ENCODE measurements at regions of chr6 and their contacts with region 1.

Region 1: DNA sequence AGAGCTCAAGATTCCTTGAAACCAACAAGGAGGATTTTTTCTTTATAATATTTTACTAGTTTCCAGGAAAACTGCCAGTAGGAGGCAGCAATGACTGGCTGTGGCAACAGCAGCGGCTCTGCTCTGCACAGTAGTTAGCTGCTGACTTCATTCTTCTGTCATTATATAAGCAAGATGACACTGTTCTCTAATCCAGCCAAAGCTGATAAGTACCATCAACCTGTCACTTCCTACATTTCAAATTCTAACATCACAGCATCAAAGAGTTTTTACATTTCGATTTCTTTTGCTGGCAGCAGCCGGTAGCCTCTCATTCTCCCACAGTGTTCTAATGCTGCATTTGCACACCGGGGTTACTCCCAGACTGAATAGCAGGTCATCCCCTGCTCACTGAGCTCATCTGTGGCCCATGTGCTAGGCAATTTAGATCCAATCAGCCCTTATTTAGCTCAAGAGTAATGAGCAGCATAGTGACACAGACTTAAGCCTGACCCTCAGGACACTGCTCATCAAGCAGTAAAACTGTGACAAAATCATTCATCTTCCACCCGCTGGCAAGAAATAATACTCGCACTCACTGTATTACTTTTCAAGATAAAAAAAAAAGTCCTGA is 67.8 kb downstream of the MMS22L start:
- DNase-seq: peak in 1 of 2 experiments; percentile 33
- H3K4me3 ChIP-seq: no peak overlapping the region
- H3K4me3 Mint-ChIP-seq: no peak overlapping the region
- H3K27ac Mint-ChIP-seq: no peak overlapping the region
- H3K4me1 ChIP-seq: no peaks in the 10 kb centered on the region; the same call in 1 of the 2 replicates
- H3K4me1 Mint-ChIP-seq: no peaks in the 10 kb centered on the region
- H3K27me3 ChIP-seq: no peaks in the 10 kb centered on the region
- H3K27me3 Mint-ChIP-seq: no peaks in the 10 kb centered on the region
- CTCF ChIP-seq: peak; percentile 30 to 66

Region 2: DNA sequence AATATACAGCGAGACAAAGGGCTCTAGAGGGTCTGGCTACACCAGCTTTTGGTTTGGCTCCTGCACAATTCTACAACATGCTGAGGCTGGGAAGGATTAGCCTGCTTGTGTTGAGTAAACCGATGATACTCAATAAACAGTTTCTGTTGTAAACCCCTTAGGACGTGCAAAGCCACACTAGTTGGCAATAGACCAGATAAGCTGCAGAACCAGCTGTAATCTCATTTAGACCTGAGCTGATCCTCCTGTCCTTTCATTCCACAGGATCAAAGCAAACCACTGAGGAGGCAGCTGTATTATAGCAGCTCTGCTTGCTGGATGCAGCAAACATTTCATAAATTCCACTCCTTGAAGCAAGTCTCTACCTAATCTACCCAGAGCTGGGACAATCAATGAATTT is 11.9 kb before region 1 on chr6:
- CTCF ChIA-PET with region 1: interaction called, 12 read pairs
- POLR2A ChIA-PET with region 1: no interaction called
- intact Hi-C with region 1: no loop called
- DNase-seq: peak; percentile 49 to 54
- H3K4me3 ChIP-seq: no peak overlapping the region
- H3K4me3 Mint-ChIP-seq: no peak overlapping the region
- H3K27ac Mint-ChIP-seq: no peak overlapping the region
- H3K4me1 ChIP-seq: peaks cover 9% of the 10 kb centered on the region; the same call in 1 of the 2 replicates
- H3K4me1 Mint-ChIP-seq: no peaks in the 10 kb centered on the region
- H3K27me3 ChIP-seq: no peaks in the 10 kb centered on the region
- H3K27me3 Mint-ChIP-seq: no peaks in the 10 kb centered on the region
- CTCF ChIP-seq: no peak

Measured in Caco-2 (cell line).